ENCODE measurements at regions of chr1 and their contacts with region 1.

Region 1: DNA sequence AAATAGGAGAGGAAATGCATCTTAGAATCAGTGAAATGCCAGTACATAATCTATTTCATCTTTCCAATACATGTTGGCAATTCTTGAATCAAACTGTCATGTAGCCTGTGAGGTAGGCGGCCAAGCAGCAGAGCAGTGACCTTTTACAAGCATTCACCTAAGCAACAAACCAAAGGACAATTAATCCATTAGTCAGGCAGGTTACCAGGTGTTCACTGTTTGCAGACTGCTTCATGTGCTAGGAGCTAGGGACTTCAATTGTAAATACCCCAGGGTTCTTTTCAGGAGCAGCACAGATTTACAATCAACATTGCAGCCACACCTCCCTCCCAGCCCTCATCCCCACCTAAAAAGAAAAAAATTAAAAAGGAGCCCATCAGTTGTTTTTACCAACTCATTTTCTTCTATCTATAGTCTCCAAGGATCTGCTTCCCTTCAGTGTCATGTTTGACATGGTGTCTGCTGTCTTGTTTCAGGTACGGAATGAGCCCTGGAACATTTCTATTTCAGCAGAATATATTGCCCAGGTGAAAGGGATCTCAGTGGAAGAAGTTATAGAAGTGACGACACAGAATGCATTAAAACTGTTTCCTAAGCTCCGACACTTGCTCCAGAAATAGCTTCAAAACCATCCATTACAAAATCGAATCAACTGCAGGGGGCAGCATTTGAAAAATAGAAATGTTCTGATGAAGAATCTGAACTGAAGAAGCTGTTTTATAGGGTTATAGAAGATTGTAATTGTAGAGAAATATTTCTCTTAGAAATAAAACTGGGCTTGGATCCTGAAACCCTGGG is 23.0 kb downstream of the TATDN3 start:
- DNase-seq: no peak
- H3K4me3 ChIP-seq: no peak overlapping the region
- CTCF ChIP-seq: no peak
- POLR2A ChIP-seq: no peak

Region 2: DNA sequence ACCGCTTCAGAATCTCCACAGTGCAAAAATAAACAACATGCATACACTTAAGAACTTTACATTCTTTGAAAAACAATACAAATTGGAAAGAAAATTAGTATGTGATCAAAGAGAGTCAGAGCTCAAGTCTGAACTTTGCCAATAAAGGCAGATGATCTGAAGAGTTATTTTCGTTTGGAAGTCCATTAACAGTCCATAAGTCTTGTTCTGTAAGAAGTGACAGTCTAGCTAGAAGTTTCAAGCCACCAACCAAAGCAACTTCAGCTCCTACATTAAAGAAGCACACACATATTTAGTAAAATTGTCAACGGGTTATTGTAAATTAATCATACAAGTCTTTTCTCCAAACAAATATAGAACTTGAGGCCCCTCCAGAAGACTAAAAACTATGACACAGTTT is 180.2 kb after region 1 on chr1:
- intact Hi-C with region 1: loop called (anchors 5 kb)
- DNase-seq: no peak
- H3K4me3 ChIP-seq: no peak overlapping the region
- CTCF ChIP-seq: no peak
- POLR2A ChIP-seq: no peak

Region 3: GRCh38 chr1:213274140-213274539 is 459.4 kb after region 1 on chr1:
- intact Hi-C with region 1: no loop called
- DNase-seq: no peak
- H3K4me3 ChIP-seq: no peak overlapping the region
- CTCF ChIP-seq: no peak
- POLR2A ChIP-seq: no peak